Activated CD4-positive, alpha-beta T cell treated with anti-CD3 and anti-CD28 coated beads for 36 hours (primary cell): ENCODE measurements at regions of chr16 and their contacts with region 1.

Region 1: DNA sequence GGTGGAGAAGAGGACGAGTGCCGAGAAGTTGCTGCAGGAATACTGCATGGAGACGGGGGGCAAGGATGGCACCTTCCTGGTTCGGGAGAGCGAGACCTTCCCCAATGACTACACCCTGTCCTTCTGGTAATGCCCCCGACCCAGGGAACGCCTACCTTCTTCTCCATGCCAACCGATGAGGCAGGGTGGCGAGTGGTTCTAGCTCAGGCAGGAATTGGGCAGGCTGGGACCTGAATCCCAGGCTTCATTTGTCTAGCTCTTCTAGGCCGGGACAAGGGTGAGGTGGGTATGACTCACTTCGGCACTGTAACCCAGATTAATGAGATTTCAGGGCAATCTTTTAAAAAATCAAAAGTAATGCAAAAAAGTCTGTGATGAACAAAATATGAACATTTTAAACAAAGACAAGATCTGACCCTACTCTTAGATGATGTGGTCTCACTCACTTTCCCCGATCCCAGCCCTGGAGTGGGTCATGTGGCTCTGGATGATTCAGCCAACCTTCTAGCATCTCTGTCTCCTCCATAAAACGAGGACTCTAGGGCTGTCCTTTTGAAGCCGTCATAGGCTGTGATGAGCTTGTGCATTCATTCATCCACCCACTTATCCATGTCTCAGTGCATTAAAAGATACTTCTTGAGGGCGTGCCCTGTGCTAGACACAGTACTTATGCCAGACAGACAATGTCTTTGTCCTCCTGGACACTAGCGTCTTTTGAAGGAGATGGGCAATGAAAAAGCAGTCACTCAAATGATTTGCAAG is 102.6 kb downstream of the SDR42E1 start:
- DNase-seq: no peak
- ATAC-seq: no peak
- H3K4me3 Mint-ChIP-seq: no peak overlapping the region
- H3K27ac Mint-ChIP-seq: no peak overlapping the region
- H3K4me1 Mint-ChIP-seq: no peaks in the 10 kb centered on the region
- H3K27me3 Mint-ChIP-seq: no peaks in the 10 kb centered on the region

Region 2: GRCh38 chr16:81928975-81929374 is 20.3 kb after region 1 on chr16:
- CTCF ChIA-PET with region 1: no interaction called
- POLR2A ChIA-PET with region 1: no interaction called
- intact Hi-C with region 1: loop called in 1 of 2 experiments (anchors 1 kb)
- DNase-seq: peak; percentile 61
- ATAC-seq: peak; percentile 88
- H3K4me3 Mint-ChIP-seq: no peak overlapping the region
- H3K27ac Mint-ChIP-seq: no peak overlapping the region
- H3K4me1 Mint-ChIP-seq: peaks cover 4% of the 10 kb centered on the region
- H3K27me3 Mint-ChIP-seq: no peaks in the 10 kb centered on the region